ENCODE measurements at regions of chr12 and their contacts with region 1.

Region 1: DNA sequence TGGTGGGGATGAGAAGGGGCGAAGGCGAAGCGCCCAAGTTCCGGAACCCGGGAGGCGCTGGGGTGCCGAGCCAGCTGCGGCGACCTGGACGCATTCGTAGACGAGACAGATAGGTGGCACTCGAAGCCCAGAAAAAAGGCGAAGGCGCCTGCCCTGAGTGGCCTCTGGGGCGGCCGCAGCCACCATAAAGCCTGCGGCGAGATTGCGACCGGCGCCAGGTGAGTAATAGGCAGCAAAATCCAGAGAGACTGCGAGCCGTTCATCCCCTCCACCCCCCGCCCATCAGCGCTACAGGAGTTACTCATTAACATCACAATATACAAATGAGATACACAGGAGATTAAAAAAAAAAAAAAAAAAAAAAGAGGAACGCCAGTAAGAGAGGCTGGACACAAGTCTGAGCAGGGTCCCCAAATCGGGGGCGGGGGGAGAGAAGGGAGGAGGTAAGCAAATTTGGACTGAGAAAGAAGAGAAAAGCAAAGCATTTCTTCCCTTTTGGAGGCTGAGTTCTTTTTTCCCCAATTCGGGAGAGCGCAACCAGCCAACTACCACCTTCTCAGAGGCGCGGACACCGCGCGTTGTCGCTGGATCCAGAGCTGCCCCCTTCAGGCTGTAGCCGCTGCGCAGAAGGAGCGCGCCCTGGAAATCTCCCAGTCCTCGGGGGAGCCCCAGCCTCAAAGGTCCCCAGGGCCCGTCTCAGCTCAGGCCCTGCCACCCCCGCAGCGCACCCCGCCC is 15.7 kb downstream of the TBX3 start:
- DNase-seq: no peak
- H3K4me3 ChIP-seq: peak overlapping the region; percentile 43
- H3K27me3 ChIP-seq: no peaks in the 10 kb centered on the region
- CTCF ChIP-seq: peak; percentile 74

Region 2: GRCh38 chr12:113241191-113242025 is 1426.9 kb before region 1 on chr12:
- CTCF ChIA-PET with region 1: no interaction called
- POLR2A ChIA-PET with region 1: interaction called, 23 read pairs
- DNase-seq: peak; percentile 98
- H3K4me3 ChIP-seq: no peak overlapping the region
- H3K27me3 ChIP-seq: no peaks in the 10 kb centered on the region
- CTCF ChIP-seq: no peak

Region 3: DNA sequence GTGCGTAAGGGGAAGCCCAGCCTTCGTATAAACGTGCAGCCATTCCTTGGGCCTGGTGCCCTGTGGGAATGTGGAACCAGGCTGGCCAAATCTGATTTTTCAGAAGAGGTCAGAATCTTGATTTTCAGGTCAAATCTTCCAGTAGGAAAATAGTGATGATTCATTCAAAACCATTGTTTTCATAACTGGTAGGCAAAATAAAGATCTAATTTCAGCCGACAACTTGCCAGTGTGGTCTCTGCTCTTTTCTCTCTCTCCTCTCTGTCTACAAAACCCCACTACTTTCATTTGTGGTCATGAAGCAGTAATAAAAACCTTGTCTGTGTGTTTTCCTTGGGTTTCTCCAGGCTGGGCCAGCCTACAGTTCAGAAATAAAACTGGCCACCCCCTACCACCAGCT is 837.3 kb before region 1 on chr12:
- CTCF ChIA-PET with region 1: no interaction called
- POLR2A ChIA-PET with region 1: no interaction called
- DNase-seq: no peak
- H3K4me3 ChIP-seq: no peak overlapping the region
- H3K27me3 ChIP-seq: no peaks in the 10 kb centered on the region
- CTCF ChIP-seq: no peak

Region 4: GRCh38 chr12:114580306-114580705 is 88.0 kb before region 1 on chr12:
- CTCF ChIA-PET with region 1: no interaction called
- POLR2A ChIA-PET with region 1: no interaction called
- DNase-seq: no peak
- H3K4me3 ChIP-seq: no peak overlapping the region
- H3K27me3 ChIP-seq: no peaks in the 10 kb centered on the region
- CTCF ChIP-seq: no peak

Region 5: GRCh38 chr12:114697741-114698565 is 29.6 kb after region 1 on chr12:
- CTCF ChIA-PET with region 1: no interaction called
- POLR2A ChIA-PET with region 1: no interaction called
- DNase-seq: no peak
- H3K4me3 ChIP-seq: peak overlapping the region; percentile 46
- H3K27me3 ChIP-seq: no peaks in the 10 kb centered on the region
- CTCF ChIP-seq: no peak

Region 6: DNA sequence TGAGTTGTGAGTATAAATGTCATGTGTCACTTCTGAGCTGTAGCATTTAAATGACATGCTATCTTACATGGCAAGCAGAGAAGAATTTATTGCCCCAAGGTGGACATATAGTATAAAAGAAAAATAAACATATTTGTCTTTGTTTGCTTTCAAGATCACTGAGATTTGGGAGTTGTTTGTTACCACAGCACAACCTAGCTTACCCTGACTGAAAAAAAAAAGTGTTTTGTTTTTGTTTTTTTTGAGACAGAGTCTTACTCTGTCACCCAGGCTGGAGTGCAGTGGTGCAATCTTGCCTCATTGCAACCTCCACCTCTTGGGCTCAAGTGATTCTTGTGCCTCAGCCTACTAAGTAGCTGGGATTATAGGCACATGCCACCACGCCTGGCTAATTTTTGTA is 1012.6 kb after region 1 on chr12:
- CTCF ChIA-PET with region 1: no interaction called
- POLR2A ChIA-PET with region 1: interaction called, 11 read pairs
- DNase-seq: no peak
- H3K4me3 ChIP-seq: no peak overlapping the region
- H3K27me3 ChIP-seq: no peaks in the 10 kb centered on the region
- CTCF ChIP-seq: no peak

Region 7: GRCh38 chr12:115752913-115753726 is 1084.8 kb after region 1 on chr12:
- CTCF ChIA-PET with region 1: interaction called, 59 read pairs
- POLR2A ChIA-PET with region 1: interaction called, 7 read pairs
- DNase-seq: no peak
- H3K4me3 ChIP-seq: no peak overlapping the region
- H3K27me3 ChIP-seq: no peaks in the 10 kb centered on the region
- CTCF ChIP-seq: peak; percentile 70

Region 8: DNA sequence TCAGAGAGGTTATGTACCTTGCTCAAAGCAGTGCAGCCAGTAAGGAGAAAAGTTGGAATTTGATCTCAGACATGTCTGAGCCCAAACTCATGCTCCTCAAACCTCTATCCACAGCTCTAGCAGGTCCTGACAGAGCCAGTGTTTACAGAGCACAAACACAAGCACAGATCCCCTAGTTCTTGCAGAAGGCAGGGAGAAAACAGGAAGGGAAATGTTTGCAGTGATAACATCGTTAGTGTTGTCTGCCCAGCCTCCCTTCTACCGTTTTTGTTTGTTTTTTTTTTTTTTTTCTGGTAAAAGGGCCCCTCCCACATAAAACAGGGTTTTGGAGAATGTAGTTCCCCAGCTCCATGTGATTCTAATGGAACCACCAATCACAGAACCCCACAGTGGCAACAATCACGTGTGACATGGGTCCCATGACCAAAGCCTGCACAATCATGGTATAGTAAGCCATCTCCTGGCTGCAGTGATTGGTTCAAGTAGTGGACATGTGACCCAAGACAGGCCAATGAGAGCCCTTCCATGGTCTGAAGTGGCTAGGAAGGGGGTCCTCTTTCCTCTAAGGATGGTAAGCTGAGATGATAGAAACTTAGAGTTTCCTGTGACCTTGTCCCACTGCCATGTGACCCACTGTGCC is 1095.8 kb after region 1 on chr12:
- CTCF ChIA-PET with region 1: interaction called, 14 read pairs
- POLR2A ChIA-PET with region 1: interaction called, 18 read pairs
- DNase-seq: no peak
- H3K4me3 ChIP-seq: no peak overlapping the region
- H3K27me3 ChIP-seq: no peaks in the 10 kb centered on the region
- CTCF ChIP-seq: no peak

Measured in BJ (cell line).